OCI-LY7 (cell line): ENCODE measurements at regions of chr22 and their contacts with region 1.

Region 1: GRCh38 chr22:41621099-41621910 is at the start of gene XRCC6:
- DNase-seq: peak; percentile 100
- H3K4me3 ChIP-seq: peak within 1 kb of the TSS; percentile 78
- H3K27ac ChIP-seq: peak within 1 kb of the TSS; percentile 71
- H3K4me1 ChIP-seq: peaks cover 28% of the 10 kb centered on the region
- CTCF ChIP-seq: no peak
- total RNA-seq, gene XRCC6: 378 and 419 TPM in 2 replicates

Region 2: DNA sequence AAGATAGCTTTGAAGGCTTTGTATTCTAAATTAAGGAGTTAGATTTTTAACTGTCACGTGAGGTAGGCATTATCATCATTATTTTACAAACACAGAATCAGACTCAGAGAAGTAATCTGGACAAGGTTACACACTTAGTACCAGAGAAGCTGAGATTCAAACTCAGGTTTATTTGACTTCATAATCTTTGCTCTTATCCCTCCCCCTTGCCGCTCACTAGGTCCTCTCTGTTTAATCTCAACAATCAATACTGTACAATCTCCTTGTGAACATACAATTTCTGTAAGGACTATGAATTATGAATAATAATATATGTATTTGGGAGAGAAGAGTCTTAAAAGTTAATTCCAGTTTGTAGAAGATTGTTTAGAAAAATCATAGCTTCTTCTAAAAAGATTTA is 754.2 kb before region 1 on chr22:
- CTCF ChIA-PET with region 1: no interaction called
- POLR2A ChIA-PET with region 1: no interaction called
- intact Hi-C with region 1: no loop called
- DNase-seq: no peak
- H3K4me3 ChIP-seq: no peak overlapping the region
- H3K27ac ChIP-seq: no peak overlapping the region
- H3K4me1 ChIP-seq: peaks cover 8% of the 10 kb centered on the region
- CTCF ChIP-seq: no peak

Region 3: DNA sequence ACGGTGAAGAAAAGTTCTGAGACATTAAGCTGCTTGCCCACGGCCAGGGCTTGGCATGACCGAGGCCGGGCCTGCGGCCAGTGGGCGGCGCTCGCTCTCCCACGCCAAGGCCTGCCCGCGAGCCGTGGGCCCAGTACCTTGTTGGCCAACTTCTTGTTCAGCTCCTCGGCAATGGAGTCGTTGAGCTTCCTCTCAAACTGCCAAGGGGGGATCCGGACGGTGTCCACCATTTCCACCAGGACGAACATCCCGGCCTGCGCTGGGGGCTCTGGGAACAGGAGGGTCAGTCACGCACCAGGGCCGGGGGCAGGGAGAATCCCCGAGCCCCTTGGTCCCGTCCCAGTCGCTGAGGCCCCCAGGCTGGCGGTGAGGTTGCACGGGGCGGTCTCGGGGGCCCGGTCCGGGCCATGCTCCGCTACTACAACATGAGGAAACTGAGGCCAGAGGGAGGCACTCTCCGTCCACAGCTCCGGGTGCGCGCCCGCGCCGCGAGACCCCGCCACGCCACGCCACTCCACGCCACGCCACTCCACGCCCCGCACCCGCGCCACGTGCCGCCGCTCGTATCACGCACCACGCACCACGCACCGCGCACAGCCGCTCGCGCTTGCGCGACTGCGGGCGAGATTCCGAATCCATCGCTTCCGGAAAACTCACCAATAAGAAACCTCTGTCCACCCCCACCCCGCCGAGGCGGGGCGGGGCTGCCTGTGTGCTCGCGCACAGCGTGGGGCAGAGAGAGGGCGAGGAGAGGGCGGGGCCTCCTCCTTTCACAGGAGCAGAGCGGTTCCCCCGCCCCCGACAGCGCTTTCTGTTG is 77.2 kb before region 1 on chr22 and contains the start of gene POLR3H:
- CTCF ChIA-PET with region 1: no interaction called
- POLR2A ChIA-PET with region 1: no interaction called
- intact Hi-C with region 1: loop called (anchors 2 kb)
- DNase-seq: peak; percentile 98
- H3K4me3 ChIP-seq: peak within 1 kb of the TSS; percentile 88
- H3K27ac ChIP-seq: peak within 1 kb of the TSS; percentile 21
- H3K4me1 ChIP-seq: peaks cover 31% of the 10 kb centered on the region
- CTCF ChIP-seq: peak; percentile 87
- total RNA-seq, gene POLR3H: 26.6 and 28.5 TPM in 2 replicates

Region 4: GRCh38 chr22:41589391-41590241 is 31.7 kb before region 1 on chr22 and contains the start of gene PMM1:
- CTCF ChIA-PET with region 1: interaction called, 3 read pairs
- POLR2A ChIA-PET with region 1: interaction called, 14 read pairs
- intact Hi-C with region 1: loop called (anchors 1 kb)
- DNase-seq: peak; percentile 100
- H3K4me3 ChIP-seq: peak within 1 kb of the TSS; percentile 81
- H3K27ac ChIP-seq: peak within 1 kb of the TSS; percentile 64
- H3K4me1 ChIP-seq: peaks cover 19% of the 10 kb centered on the region
- CTCF ChIP-seq: no peak
- total RNA-seq, gene PMM1: 17.0 and 17.5 TPM in 2 replicates

Region 5: DNA sequence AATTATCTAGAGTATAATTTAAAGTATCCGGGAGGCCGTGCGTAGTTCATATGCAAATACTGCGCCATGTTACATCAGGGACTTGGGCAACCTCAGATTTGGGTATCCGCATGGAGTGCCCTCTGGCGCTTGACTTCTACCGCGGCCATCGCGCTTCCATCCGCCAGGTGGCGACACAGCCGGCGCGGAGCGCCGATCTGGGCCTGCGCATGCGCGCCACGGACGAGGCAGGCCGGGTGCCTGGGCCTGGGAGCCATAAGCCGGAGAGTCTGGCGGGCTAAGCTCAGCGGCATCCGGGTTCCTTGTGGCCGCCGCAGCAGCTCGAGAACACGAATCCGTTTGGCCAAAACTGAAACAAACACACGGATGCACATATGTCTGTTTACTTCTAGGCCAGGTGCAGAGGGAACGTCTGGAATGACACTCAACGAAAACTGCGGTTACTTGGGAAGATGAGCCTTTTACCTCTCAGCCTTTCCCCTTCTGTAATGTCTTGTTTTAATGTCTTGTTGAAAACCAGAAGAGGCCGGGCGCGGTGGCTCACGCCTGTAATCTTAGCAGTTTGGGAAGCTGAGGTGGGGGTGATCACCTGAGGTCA is 45.5 kb after region 1 on chr22:
- CTCF ChIA-PET with region 1: interaction called, 3 read pairs
- POLR2A ChIA-PET with region 1: interaction called, 5 read pairs
- intact Hi-C with region 1: loop called (anchors 5 kb)
- DNase-seq: peak; percentile 96
- H3K4me3 ChIP-seq: peak overlapping the region; percentile 57
- H3K27ac ChIP-seq: peak overlapping the region; percentile 87
- H3K4me1 ChIP-seq: peaks cover 16% of the 10 kb centered on the region
- CTCF ChIP-seq: peak; percentile 99